HEK293 (cell line): ENCODE measurements at regions of chr6 and their contacts with region 1.

Region 1: GRCh38 chr6:156579564-156579963 is 197.6 kb upstream of the ARID1B start:
- H3K4me3 ChIP-seq: no peak overlapping the region
- H3K27ac ChIP-seq: no peak overlapping the region
- H3K4me1 ChIP-seq: no peaks in the 10 kb centered on the region
- CTCF ChIP-seq: no peak

Region 2: DNA sequence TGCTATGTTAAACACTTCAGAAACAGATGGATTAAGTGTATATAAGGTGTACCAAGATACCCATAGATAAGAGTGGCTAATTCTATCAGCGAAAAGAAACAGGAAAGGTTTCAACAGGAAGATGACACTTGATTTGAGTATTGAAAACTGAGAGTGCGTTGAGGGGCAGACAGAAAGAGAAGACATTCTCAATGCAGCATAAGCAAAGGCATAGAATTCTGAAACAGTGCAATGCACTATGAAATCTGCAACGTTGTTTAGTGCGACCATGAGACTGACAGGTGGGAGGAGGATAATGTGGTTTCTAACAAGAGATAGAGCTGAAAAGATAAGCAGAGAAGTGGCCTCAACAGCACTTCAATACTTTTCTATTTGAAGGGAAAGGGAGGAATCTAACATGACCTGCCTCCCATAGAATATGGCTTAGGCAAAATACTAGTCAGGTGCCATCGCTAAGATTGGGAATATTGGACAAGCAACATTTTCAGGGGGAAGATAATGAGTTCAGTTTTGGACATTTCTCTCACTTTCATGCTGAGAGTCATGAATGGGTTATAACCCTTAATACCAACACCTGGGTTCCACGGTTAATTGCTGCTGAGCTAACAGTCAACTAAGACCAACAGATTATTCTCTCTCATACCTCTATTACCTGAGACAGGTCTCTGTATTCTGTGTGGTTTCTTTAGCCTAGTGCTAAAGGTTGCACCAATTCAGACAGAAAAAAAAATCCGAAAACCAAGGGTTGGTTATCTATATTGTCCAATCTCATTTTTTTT is 115.3 kb before region 1 on chr6:
- CTCF ChIA-PET with region 1: no interaction called
- POLR2A ChIA-PET with region 1: no interaction called
- H3K4me3 ChIP-seq: no peak overlapping the region
- H3K27ac ChIP-seq: no peak overlapping the region
- H3K4me1 ChIP-seq: no peaks in the 10 kb centered on the region
- CTCF ChIP-seq: no peak

Region 3: GRCh38 chr6:156564127-156564806 is 15.3 kb before region 1 on chr6:
- CTCF ChIA-PET with region 1: interaction called, 11 read pairs
- POLR2A ChIA-PET with region 1: no interaction called
- H3K4me3 ChIP-seq: no peak overlapping the region
- H3K27ac ChIP-seq: no peak overlapping the region
- H3K4me1 ChIP-seq: no peaks in the 10 kb centered on the region
- CTCF ChIP-seq: peak; percentile 89

Region 4: GRCh38 chr6:156630613-156631302 is 51.2 kb after region 1 on chr6:
- CTCF ChIA-PET with region 1: no interaction called
- POLR2A ChIA-PET with region 1: no interaction called
- H3K4me3 ChIP-seq: no peak overlapping the region
- H3K27ac ChIP-seq: no peak overlapping the region
- H3K4me1 ChIP-seq: no peaks in the 10 kb centered on the region
- CTCF ChIP-seq: no peak